AG04449 (cell line): ENCODE measurements at regions of chr10 and their contacts with region 1.

Region 1: GRCh38 chr10:79374312-79375191 is 27.3 kb downstream of the PPIF start:
- DNase-seq: no peak
- H3K4me3 ChIP-seq: no peak overlapping the region
- CTCF ChIP-seq: peak; percentile 94

Region 2: DNA sequence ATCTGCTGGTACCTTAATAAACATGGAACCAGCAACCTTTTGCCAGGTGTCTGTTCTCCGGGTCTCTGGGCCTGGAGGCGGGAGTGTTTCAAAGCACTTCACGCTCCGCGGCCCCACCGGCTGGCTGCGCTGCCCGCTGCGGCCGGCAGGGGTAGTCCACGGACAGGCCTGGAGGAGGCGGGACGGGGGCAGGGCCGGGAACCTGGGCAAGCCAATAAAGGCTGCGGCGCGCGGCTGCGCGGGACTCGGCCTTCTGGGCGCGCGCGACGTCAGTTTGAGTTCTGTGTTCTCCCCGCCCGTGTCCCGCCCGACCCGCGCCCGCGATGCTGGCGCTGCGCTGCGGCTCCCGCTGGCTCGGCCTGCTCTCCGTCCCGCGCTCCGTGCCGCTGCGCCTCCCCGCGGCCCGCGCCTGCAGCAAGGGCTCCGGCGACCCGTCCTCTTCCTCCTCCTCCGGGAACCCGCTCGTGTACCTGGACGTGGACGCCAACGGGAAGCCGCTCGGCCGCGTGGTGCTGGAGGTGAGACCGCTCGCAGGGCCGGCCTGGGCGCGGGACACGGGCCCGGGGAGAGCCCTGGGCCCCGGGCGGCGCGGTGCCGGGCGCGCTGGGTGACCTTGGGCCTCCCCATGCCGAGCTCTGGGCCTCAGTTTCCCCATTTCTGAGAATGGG is 27.2 kb before region 1 on chr10 and contains the start of gene PPIF:
- CTCF ChIA-PET with region 1: interaction called, 25 read pairs
- POLR2A ChIA-PET with region 1: no interaction called
- DNase-seq: no peak
- H3K4me3 ChIP-seq: peak within 1 kb of the TSS; percentile 86
- CTCF ChIP-seq: peak; percentile 95

Region 3: GRCh38 chr10:79390551-79391209 is 16.1 kb after region 1 on chr10:
- CTCF ChIA-PET with region 1: interaction called, 42 read pairs
- POLR2A ChIA-PET with region 1: no interaction called
- DNase-seq: no peak
- H3K4me3 ChIP-seq: no peak overlapping the region
- CTCF ChIP-seq: no peak

Region 4: GRCh38 chr10:79445141-79445976 is 70.8 kb after region 1 on chr10 and contains the start of gene ZCCHC24:
- CTCF ChIA-PET with region 1: interaction called, 18 read pairs
- POLR2A ChIA-PET with region 1: interaction called, 4 read pairs
- DNase-seq: peak; percentile 85
- H3K4me3 ChIP-seq: peak within 1 kb of the TSS; percentile 79
- CTCF ChIP-seq: no peak

Region 5: GRCh38 chr10:79502561-79503309 is 128.2 kb after region 1 on chr10:
- CTCF ChIA-PET with region 1: interaction called, 21 read pairs
- POLR2A ChIA-PET with region 1: no interaction called
- DNase-seq: no peak
- H3K4me3 ChIP-seq: no peak overlapping the region
- CTCF ChIP-seq: peak; percentile 23